ENCODE measurements at regions of chr5 and their contacts with region 1.

Region 1: GRCh38 chr5:148740966-148741742 is 85.3 kb upstream of the ADRB2 start:
- DNase-seq: no peak
- ATAC-seq: peak; percentile 64; the same call in 1 of the 2 replicates
- H3K4me3 Mint-ChIP-seq: no peak overlapping the region
- H3K27ac Mint-ChIP-seq: no peak overlapping the region
- H3K4me1 Mint-ChIP-seq: no peaks in the 10 kb centered on the region
- H3K27me3 Mint-ChIP-seq: no peaks in the 10 kb centered on the region; the same call in 1 of the 2 replicates
- CTCF ChIP-seq: peak; percentile 39; the same call in 1 of the 2 replicates

Region 2: DNA sequence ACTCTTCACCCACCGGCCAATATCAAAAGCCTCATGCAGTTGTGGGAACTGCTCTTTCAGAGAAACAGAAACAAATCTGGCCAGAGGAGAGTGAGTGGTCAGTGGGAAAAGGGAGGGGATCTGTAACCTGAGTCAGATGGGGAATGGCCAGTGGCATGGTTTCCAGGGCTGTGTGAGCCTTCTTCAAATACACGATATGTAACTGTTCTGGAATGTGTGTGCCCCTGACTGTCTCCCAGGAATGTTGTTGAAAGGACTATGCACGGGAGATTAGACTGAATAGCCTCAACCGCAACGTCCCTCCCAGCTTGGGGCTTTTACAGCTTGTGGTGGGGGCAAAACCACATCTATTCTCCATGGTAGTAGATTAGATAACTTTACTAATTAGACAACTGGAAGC is 260.9 kb after region 1 on chr5:
- CTCF ChIA-PET with region 1: interaction called, 16 read pairs
- POLR2A ChIA-PET with region 1: no interaction called
- DNase-seq: no peak
- ATAC-seq: peak; percentile 72
- H3K4me3 Mint-ChIP-seq: no peak overlapping the region
- H3K27ac Mint-ChIP-seq: peak overlapping the region; percentile 58; the same call in 1 of the 2 replicates
- H3K4me1 Mint-ChIP-seq: peaks cover 8% of the 10 kb centered on the region
- H3K27me3 Mint-ChIP-seq: no peaks in the 10 kb centered on the region; the same call in 1 of the 2 replicates
- CTCF ChIP-seq: no peak

Region 3: DNA sequence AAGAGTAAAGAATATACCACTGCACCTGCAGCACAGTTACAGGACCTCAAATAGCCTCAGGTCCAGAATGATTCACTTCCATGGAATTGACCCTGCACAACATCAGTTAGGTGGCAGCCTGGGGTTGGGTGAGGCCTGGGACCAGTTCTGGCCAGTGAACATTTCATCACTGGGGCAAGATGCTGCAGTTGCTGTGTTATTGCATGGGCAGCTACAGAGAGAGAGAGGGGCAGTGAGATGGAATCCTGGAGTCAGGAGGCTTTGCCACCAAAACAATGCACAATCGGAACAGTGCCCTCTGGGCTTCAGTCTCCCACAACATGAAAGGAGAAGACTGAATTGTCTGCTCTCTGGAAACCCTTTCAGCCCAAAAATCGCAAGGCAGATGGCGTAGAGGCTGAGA is 269.9 kb after region 1 on chr5:
- CTCF ChIA-PET with region 1: interaction called, 10 read pairs
- POLR2A ChIA-PET with region 1: no interaction called
- DNase-seq: no peak
- ATAC-seq: no peak
- H3K4me3 Mint-ChIP-seq: no peak overlapping the region
- H3K27ac Mint-ChIP-seq: no peak overlapping the region
- H3K4me1 Mint-ChIP-seq: no peaks in the 10 kb centered on the region
- H3K27me3 Mint-ChIP-seq: no peaks in the 10 kb centered on the region
- CTCF ChIP-seq: no peak

Measured in WTC11 (cell line).